Right ventricle myocardium inferior (tissue), 1 donor: ENCODE measurements at regions of chr5 and their contacts with region 1.

Region 1: DNA sequence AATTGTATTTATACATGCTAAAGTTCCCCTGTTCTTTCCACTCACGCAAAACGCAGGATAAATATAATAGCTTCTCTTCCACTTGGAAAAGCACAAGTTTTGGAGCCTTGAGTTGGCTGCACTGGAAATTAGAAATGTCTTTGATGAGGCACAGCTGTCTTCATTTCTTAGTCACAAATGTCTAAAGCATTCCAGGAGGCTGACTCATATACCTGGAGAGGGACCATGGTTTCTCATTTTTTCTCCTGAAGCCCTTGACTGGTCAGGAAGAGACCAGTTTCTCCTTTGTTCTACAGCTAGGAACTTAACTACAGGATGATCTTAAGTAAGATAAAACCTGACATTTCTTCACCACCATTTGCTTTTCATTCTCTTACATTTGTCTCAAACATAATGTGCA is 16.2 kb downstream of the MTX3 start:
- DNase-seq: no peak
- ATAC-seq: no peak

Region 2: GRCh38 chr5:79962575-79963222 is 12.2 kb before region 1 on chr5:
- intact Hi-C with region 1: no loop called
- DNase-seq: no peak
- ATAC-seq: no peak

Region 3: DNA sequence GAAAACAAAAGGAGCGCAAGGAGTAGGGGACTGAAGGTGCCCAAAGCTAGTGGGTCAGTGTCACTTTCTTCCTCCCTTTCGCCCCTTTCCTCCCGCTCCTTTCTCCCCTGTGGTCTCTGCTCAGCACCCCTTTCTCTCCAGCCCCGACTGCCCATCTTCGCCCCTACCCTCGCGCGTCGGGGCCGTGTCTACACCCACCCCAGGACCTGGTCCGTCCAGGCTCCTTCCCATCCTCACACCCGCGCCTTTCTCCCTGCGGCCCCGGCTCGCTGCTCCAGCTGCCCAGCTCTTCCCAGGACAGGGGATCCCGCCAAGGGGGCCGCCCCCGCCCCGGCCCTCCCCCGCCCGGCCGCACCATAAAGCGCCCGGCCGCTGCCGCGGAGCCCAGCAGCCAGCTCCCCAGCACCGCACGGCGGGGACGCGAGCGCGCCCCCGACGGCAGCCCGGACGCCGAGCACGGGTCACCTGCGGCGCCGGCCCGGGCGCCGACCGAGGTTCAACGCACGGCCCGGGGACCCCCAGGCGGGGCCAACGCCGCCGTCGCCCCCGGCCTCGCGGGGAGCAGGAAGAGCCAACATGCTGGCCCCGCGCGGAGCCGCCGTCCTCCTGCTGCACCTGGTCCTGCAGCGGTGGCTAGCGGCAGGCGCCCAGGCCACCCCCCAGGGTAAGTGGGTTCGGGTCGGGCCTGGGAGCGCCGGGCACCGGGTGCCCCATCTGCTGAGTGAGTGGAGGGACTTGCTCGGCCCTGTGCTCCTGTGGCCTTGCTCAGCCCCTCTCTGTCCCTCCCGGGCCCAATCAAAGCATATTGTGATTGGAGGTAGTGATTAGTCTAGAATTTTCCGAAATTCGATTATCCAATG is 60.3 kb after region 1 on chr5 and contains the start of gene THBS4:
- intact Hi-C with region 1: loop called (anchors 5 kb)
- DNase-seq: no peak
- ATAC-seq: no peak
- total RNA-seq, gene THBS4: 32.9 TPM